Mammary epithelial cell (primary cell): ENCODE measurements at regions of chr13 and their contacts with region 1.

Region 1: DNA sequence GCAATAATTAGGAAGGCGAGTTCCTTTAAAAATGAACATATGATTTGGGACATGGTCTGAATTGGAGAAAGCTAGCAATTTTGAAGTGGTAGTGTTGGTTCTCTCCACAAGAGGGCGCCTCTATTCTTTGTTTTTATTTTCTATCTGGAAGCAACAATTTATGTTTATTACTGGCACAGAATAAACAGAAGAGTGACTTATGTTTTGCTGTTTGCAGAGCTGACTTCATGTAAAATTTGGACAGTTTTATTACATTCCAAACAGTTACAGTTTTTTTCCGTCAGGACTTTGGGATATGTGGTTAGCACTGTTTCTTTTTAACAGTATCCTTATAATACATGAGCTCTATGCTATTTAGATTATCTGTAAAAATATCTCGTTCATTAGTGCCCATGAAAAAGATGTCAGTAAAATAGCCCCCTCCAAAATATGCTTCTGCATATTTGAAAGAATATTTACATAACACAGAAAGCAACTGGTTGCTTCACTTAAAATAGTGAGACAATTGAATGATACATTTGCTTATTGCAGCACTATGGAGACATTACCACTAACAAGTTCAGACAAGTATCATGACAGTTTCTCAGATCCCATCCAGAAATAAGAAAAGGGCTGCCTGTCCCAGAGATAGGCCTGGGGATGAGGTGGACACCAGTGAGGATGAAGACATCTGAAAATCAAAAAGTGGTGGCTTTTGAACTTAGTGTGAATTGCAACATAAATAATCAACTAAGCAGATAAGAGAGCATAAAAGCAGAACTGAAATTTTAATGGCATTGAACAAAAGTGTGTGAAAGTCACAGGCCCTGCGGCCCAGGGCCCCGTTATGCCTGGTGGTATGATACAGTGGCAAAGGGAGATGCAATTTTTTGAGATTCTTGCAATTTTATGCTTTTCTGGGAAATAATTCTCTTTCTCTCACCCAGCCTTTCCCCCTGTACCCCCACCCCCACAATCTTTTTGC is 32.3 kb upstream of the FGF9 start:
- DNase-seq: peak; percentile 75
- H3K4me3 ChIP-seq: no peak overlapping the region
- H3K27ac ChIP-seq: peak overlapping the region; percentile 55
- H3K4me1 ChIP-seq: peaks cover 26% of the 10 kb centered on the region
- H3K27me3 ChIP-seq: no peaks in the 10 kb centered on the region
- CTCF ChIP-seq: peak; percentile 61 to 62

Region 2: DNA sequence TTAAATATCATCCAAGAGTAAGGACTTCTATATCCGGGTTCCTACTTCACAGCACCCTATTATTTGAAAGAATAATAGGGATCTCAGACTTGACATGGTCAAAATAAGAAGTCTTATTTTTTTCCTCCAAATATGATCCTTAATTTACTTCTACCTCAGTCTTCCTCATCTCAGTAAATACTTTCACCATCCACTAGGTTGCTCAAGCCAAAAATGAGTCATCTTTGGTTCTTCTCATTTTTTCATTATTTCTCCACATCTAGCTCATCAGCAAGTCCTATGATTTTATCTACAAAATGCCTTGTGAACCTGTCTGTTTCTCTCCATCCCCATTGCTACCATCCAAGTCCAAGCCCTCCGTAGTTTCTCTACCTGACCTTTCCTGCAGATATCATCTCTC is 1284.6 kb before region 1 on chr13:
- CTCF ChIA-PET with region 1: no interaction called
- dilution Hi-C with region 1: no loop called
- in situ Hi-C with region 1: no loop called
- intact Hi-C with region 1: no loop called
- DNase-seq: peak; percentile 71
- H3K4me3 ChIP-seq: no peak overlapping the region
- H3K27ac ChIP-seq: no peak overlapping the region
- H3K4me1 ChIP-seq: peaks cover 45% of the 10 kb centered on the region
- H3K27me3 ChIP-seq: no peaks in the 10 kb centered on the region
- CTCF ChIP-seq: peak; percentile 34 to 35

Region 3: DNA sequence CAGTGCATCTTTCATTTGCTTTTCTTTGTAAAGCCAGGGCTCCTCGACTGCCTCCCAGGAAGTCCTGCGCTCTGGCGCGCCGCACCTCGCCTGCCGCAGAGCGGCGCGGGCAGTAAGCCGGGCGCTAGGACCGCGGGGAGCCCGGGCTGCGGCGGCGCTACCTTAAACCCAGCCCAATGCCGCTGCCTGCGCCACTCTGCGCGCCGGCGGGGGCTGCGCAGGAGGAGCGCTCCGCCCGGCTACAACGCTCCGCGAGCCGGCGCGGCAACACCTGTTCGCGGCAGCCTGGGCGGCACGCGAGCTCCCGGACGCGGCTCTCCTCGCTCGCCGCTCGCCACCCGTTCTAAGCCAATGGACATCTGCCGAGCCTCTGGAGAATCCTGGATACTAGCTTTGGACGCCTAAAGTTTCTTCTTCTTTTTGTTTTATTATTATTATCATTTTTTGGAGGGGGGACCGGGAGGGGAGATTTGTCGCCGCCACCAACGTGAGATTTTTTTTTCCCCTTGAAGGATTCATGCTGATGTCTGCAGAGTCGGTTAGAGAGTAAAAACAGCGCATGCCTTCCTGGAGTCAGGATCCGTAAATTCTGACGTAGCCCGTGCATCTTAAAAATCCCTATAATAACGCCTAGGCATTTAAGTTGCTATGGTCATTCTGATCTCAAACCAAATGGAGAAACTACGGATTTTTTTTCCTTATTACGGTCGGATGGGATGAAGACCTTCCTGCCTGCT is 32.5 kb after region 1 on chr13 and contains the start of gene FGF9:
- CTCF ChIA-PET with region 1: interaction called, 6 read pairs
- dilution Hi-C with region 1: no loop called
- in situ Hi-C with region 1: no loop called
- intact Hi-C with region 1: loop called (anchors 1 kb)
- DNase-seq: peak; percentile 84
- H3K4me3 ChIP-seq: peak within 1 kb of the TSS; percentile 56 to 88 (median 60)
- H3K27ac ChIP-seq: no peak within 1 kb of the TSS
- H3K4me1 ChIP-seq: peaks cover 26% of the 10 kb centered on the region
- H3K27me3 ChIP-seq: peaks cover 21% of the 10 kb centered on the region
- CTCF ChIP-seq: peak in 1 of 2 donors; percentile 33
- total RNA-seq, gene FGF9: not detected

Region 4: DNA sequence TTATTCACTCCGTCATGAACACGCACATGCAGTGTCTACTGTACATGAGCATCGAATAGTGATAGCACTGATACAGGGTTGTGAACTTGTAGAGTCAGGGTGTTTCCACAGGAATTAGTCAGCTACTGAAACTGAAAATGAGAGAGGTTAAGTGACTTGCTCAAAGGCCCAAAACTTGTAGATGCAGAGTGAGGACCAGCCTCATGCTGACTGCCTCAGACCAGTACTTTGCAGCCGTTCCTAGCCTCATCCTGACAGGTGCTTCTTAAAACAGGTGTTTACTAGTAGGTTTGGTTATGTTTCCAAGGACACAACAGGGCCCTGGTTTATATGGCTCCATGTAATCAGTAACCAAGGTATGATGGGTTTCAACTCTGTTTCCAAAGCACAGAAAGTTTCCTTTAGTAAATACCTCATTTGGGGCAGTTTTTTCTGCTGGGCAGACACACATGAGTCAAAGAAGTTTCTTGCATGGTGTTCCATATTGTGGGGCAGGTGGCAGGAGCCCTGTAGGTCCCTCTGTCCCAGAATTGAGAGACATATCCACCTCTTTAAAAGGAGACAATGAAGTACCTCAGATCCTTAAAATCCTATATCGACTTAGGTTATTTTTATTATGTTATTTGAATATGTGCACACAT is 48.3 kb after region 1 on chr13:
- CTCF ChIA-PET with region 1: interaction called, 6 read pairs
- dilution Hi-C with region 1: no loop called
- in situ Hi-C with region 1: no loop called
- intact Hi-C with region 1: loop called (anchors 1 kb)
- DNase-seq: no peak
- H3K4me3 ChIP-seq: no peak overlapping the region
- H3K27ac ChIP-seq: no peak overlapping the region
- H3K4me1 ChIP-seq: peaks cover 37% of the 10 kb centered on the region
- H3K27me3 ChIP-seq: no peaks in the 10 kb centered on the region
- CTCF ChIP-seq: no peak

Region 5: GRCh38 chr13:21971662-21972621 is 333.3 kb after region 1 on chr13:
- CTCF ChIA-PET with region 1: no interaction called
- dilution Hi-C with region 1: no loop called
- in situ Hi-C with region 1: no loop called
- intact Hi-C with region 1: no loop called
- DNase-seq: no peak
- H3K4me3 ChIP-seq: no peak overlapping the region
- H3K27ac ChIP-seq: no peak overlapping the region
- H3K4me1 ChIP-seq: no peaks in the 10 kb centered on the region
- H3K27me3 ChIP-seq: no peaks in the 10 kb centered on the region
- CTCF ChIP-seq: no peak

Region 6: DNA sequence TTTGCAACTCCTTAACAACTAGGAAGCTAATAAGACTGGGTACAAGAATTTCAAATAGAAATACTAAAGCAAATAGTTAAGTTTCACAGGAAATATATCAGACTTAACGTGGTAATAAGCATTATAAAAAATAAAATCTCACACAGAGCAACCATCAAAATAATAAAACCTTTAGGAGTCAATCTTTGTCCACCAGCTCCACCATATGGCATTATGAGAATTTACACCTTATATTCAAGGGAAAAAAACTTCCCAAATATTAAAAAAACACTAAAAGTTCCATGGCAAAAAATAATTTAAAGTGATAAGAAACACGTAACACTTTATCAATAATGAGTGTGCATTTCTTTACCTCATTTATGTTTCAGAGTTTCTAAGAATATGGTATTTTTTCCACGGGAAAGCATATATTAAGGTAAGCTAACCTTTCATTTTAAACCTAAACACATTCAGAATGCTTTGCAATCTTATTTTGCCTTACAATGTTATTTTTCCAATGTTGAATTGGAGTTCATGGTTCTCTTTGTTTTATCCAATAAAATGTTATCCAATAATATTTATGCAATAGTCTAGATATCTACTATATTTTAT is 1119.0 kb after region 1 on chr13:
- CTCF ChIA-PET with region 1: no interaction called
- dilution Hi-C with region 1: no loop called
- in situ Hi-C with region 1: loop called in 1 of 2 experiments (anchors 25 kb)
- intact Hi-C with region 1: no loop called
- DNase-seq: no peak
- H3K4me3 ChIP-seq: no peak overlapping the region
- H3K27ac ChIP-seq: no peak overlapping the region
- H3K4me1 ChIP-seq: no peaks in the 10 kb centered on the region
- H3K27me3 ChIP-seq: no peaks in the 10 kb centered on the region
- CTCF ChIP-seq: peak in 1 of 2 donors; percentile 15

Region 7: GRCh38 chr13:23020223-23020843 is 1381.7 kb after region 1 on chr13:
- CTCF ChIA-PET with region 1: no interaction called
- dilution Hi-C with region 1: no loop called
- in situ Hi-C with region 1: loop called in 1 of 2 experiments (anchors 25 kb)
- intact Hi-C with region 1: no loop called
- DNase-seq: peak; percentile 29
- H3K4me3 ChIP-seq: no peak overlapping the region
- H3K27ac ChIP-seq: no peak overlapping the region
- H3K4me1 ChIP-seq: no peaks in the 10 kb centered on the region
- H3K27me3 ChIP-seq: no peaks in the 10 kb centered on the region
- CTCF ChIP-seq: peak; percentile 61 to 73

Region 8: GRCh38 chr13:23321535-23322241 is 1683.1 kb after region 1 on chr13:
- CTCF ChIA-PET with region 1: no interaction called
- dilution Hi-C with region 1: no loop called
- in situ Hi-C with region 1: loop called in 1 of 2 experiments (anchors 10 kb)
- intact Hi-C with region 1: no loop called
- DNase-seq: peak; percentile 86
- H3K4me3 ChIP-seq: peak overlapping the region in 2 of 3 experiments; percentile 15 to 24
- H3K27ac ChIP-seq: peak overlapping the region; percentile 79
- H3K4me1 ChIP-seq: peaks cover 30% of the 10 kb centered on the region
- H3K27me3 ChIP-seq: no peaks in the 10 kb centered on the region
- CTCF ChIP-seq: no peak